ENCODE measurements at regions of chr9 and their contacts with region 1.

Region 1: GRCh38 chr9:127869310-127870152 is 7.9 kb downstream of the AK1 start:
- DNase-seq: peak; percentile 85
- ATAC-seq: peak; percentile 76
- H3K4me3 ChIP-seq: no peak overlapping the region
- H3K4me3 Mint-ChIP-seq: no peak overlapping the region
- H3K27ac ChIP-seq: no peak overlapping the region
- H3K27ac Mint-ChIP-seq: peak overlapping the region; percentile 53
- H3K4me1 ChIP-seq: peaks cover 16 to 29% of the 10 kb centered on the region in 2 donors
- H3K4me1 Mint-ChIP-seq: peaks cover 25% of the 10 kb centered on the region
- H3K27me3 ChIP-seq: no peaks in the 10 kb centered on the region
- H3K27me3 Mint-ChIP-seq: no peaks in the 10 kb centered on the region
- CTCF ChIP-seq: peak; percentile 92

Region 2: GRCh38 chr9:127586537-127586936 is 283.0 kb before region 1 on chr9:
- CTCF ChIA-PET with region 1: interaction called, 23 read pairs
- POLR2A ChIA-PET with region 1: no interaction called
- intact Hi-C with region 1: loop called (anchors 1 kb)
- DNase-seq: peak; percentile 63
- ATAC-seq: peak; percentile 68
- H3K4me3 ChIP-seq: no peak overlapping the region
- H3K4me3 Mint-ChIP-seq: no peak overlapping the region
- H3K27ac ChIP-seq: no peak overlapping the region
- H3K27ac Mint-ChIP-seq: no peak overlapping the region
- H3K4me1 ChIP-seq: no peaks in the 10 kb centered on the region
- H3K4me1 Mint-ChIP-seq: no peaks in the 10 kb centered on the region
- H3K27me3 ChIP-seq: peaks cover 0 to 24% (median 7%) of the 10 kb centered on the region in 4 experiments
- H3K27me3 Mint-ChIP-seq: peaks cover 37% of the 10 kb centered on the region
- CTCF ChIP-seq: peak; percentile 63

Region 3: DNA sequence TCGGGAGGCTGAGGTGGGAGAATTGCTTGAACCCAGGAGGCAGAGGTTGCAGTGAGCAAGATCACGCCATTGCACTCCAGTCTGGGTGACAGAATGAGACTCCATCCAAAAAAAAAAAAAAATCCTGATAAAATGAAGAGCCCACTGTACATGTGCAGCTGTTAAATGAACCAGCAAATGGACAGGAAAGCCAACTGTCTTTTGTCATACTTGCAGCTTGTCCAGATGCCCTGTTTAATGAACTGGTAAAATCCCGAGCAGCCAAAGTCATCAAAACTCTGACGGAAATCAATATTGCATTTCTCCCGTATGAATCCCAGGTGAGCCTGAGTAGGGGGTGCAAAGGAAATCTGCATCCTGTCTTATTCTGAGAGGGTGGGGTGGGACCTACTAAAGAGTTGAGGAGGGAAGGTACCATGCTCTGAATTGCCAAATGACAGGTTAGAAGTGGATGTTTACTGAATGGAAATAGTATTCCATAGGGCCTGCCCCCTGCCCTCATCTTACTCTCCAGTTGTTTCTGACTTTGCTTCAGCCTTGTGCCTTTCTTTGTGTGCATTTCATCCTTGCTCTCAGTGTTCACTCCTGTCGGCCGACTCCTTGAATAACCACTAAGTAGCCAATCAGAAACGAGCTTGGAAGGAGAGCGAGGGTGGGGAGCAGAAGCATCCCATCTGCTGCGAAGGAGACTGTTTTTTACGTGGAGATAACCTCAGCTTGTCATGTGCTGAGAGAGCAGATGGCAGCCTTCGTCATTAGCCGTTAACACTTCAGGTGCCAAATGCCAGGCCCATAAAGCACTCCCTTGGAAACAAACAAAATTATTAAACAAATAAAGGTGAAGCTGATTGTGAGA is 208.4 kb before region 1 on chr9:
- CTCF ChIA-PET with region 1: no interaction called
- POLR2A ChIA-PET with region 1: no interaction called
- intact Hi-C with region 1: no loop called
- DNase-seq: no peak
- ATAC-seq: no peak
- H3K4me3 ChIP-seq: no peak overlapping the region
- H3K4me3 Mint-ChIP-seq: no peak overlapping the region
- H3K27ac ChIP-seq: no peak overlapping the region
- H3K27ac Mint-ChIP-seq: no peak overlapping the region
- H3K4me1 ChIP-seq: no peaks in the 10 kb centered on the region
- H3K4me1 Mint-ChIP-seq: no peaks in the 10 kb centered on the region
- H3K27me3 ChIP-seq: peaks cover 0 to 9% (median 0%) of the 10 kb centered on the region in 4 experiments
- H3K27me3 Mint-ChIP-seq: peaks cover 40% of the 10 kb centered on the region
- CTCF ChIP-seq: no peak

Region 4: DNA sequence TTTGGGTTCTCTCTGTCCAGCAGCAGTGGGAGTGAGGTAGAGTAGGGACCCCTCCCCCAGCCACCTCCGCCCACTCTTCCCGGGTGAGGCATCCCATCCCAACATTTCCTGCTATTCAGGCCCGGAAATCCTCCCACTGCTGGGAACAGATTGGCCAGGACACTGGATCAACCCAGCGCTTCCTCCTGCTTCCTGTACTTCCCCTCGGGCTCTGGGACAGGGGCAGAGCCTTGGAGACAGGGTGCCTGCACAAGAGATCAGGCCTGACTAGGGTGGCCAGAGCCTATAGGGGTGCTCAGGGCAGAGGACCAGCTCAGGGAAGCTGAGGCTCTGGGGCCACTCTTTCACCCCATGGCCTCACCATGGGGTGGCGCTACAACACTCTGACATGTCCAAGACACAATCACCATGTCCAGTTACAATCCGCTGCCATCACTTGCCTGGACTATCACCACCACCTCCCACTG is 105.6 kb before region 1 on chr9:
- CTCF ChIA-PET with region 1: interaction called, 25 read pairs
- POLR2A ChIA-PET with region 1: no interaction called
- intact Hi-C with region 1: no loop called
- DNase-seq: peak; percentile 44
- ATAC-seq: peak; percentile 39
- H3K4me3 ChIP-seq: no peak overlapping the region
- H3K4me3 Mint-ChIP-seq: no peak overlapping the region
- H3K27ac ChIP-seq: peak overlapping the region in 1 of 2 donors; percentile 45
- H3K27ac Mint-ChIP-seq: peak overlapping the region; percentile 73
- H3K4me1 ChIP-seq: peaks cover 22 to 44% of the 10 kb centered on the region in 2 donors
- H3K4me1 Mint-ChIP-seq: peaks cover 60% of the 10 kb centered on the region
- H3K27me3 ChIP-seq: no peaks in the 10 kb centered on the region
- H3K27me3 Mint-ChIP-seq: no peaks in the 10 kb centered on the region
- CTCF ChIP-seq: peak; percentile 34

Region 5: DNA sequence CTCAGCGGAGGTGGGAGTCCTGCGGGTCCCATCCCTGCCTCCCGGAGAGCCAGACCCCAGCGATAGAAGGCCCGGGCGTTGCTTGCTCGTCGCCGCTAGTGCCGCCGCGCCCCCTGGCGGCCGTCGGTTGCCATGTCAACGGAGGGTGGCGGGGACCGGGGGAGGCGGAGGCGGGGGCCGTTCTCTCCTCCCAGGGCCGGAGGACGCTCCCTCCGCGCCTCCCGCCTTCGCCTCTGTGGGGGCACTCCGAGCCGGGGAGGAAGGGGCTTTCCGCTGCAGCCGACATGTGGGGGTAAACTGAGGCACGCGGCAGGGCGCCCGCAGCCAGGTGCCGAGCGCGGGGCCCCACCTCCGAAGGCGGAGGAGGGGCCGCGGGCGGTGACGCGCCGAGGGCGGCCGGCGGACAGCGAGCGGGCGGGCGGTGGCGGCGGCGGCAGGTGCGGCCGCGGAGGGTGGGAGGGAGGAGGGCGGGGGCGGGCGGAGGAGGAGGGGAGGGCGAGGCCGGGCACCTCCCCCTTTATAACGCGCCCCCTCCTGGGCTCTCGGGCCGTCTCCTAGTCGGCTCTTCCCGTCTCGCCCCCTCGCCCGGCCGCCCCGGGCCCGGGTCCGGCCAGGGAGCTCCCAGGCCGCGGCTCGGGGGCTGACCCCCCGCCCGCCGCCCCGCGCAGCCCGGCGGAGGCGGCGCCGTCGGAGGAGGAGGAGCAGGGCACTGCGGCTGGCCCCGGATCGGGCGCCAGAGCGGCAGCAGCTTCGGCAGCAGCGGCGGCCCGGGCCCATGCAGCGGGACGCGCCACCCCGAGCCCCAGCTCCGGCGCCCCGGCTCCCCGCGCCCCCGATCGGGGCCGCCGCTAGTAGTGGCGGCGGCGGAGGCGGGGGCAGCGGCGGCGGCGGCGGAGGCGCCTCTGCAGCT is 84.3 kb before region 1 on chr9:
- CTCF ChIA-PET with region 1: interaction called, 34 read pairs
- POLR2A ChIA-PET with region 1: interaction called, 7 read pairs
- intact Hi-C with region 1: loop called (anchors 1 kb)
- DNase-seq: peak; percentile 95
- ATAC-seq: peak; percentile 62
- H3K4me3 ChIP-seq: peak overlapping the region in 4 of 5 experiments; percentile 48 to 99 (median 92)
- H3K4me3 Mint-ChIP-seq: peak overlapping the region; percentile 90
- H3K27ac ChIP-seq: peak overlapping the region; percentile 91 to 95
- H3K27ac Mint-ChIP-seq: peak overlapping the region; percentile 98
- H3K4me1 ChIP-seq: peaks cover 44 to 60% of the 10 kb centered on the region in 2 donors
- H3K4me1 Mint-ChIP-seq: peaks cover 56% of the 10 kb centered on the region
- H3K27me3 ChIP-seq: no peaks in the 10 kb centered on the region
- H3K27me3 Mint-ChIP-seq: no peaks in the 10 kb centered on the region
- CTCF ChIP-seq: peak; percentile 80

Region 6: GRCh38 chr9:127825319-127826051 is 44.0 kb before region 1 on chr9:
- CTCF ChIA-PET with region 1: interaction called, 14 read pairs
- POLR2A ChIA-PET with region 1: no interaction called
- intact Hi-C with region 1: no loop called
- DNase-seq: no peak
- ATAC-seq: no peak
- H3K4me3 ChIP-seq: no peak overlapping the region
- H3K4me3 Mint-ChIP-seq: no peak overlapping the region
- H3K27ac ChIP-seq: no peak overlapping the region
- H3K27ac Mint-ChIP-seq: no peak overlapping the region
- H3K4me1 ChIP-seq: no peaks in the 10 kb centered on the region
- H3K4me1 Mint-ChIP-seq: no peaks in the 10 kb centered on the region
- H3K27me3 ChIP-seq: no peaks in the 10 kb centered on the region
- H3K27me3 Mint-ChIP-seq: no peaks in the 10 kb centered on the region
- CTCF ChIP-seq: no peak

Region 7: DNA sequence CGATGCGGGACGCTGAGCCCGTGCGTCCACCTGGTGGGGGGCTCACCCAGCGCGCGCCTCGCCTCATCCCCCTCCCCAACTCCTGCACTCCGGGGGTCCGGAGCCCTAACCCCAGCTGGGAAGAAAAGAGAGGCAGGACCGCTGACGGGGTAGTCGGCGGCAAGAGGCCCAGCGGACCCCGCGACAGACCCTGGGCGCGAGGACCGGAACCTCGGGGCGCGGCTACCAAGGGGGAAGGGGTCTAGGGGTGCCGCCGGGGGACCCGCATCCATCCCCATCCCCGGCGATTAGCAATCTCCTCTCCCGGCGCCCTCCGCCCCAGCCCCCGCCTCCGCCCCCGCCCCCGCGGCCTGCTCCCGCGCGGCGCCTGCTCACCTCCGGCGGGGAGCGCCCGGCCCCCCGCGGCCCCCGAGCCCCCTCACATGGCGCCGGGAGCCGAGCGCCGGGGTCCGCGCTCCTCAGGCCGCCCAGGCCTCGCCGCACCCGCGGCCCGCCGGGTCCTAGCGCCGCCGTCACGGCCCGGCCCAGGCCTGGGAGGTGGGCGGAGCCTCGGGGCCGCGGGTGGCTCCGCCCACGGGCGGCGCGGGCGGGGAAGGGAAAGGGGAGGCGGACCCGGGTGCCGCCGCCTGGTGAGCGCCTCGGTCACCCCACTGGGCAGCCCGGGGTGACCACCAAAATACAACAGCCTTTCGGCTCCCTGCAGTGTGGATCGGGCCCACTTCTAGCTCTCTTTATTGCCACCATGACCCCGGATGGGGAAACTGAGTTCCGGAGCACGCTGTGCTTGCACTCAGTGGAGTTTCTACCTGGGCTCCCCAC is 29.8 kb after region 1 on chr9 and contains the start of gene ST6GALNAC6:
- CTCF ChIA-PET with region 1: interaction called, 12 read pairs
- POLR2A ChIA-PET with region 1: interaction called, 6 read pairs
- intact Hi-C with region 1: no loop called
- DNase-seq: peak; percentile 82
- ATAC-seq: peak; percentile 81
- H3K4me3 ChIP-seq: peak within 1 kb of the TSS; percentile 61 to 83 (median 82)
- H3K4me3 Mint-ChIP-seq: peak within 1 kb of the TSS; percentile 90
- H3K27ac ChIP-seq: peak within 1 kb of the TSS; percentile 56 to 66
- H3K27ac Mint-ChIP-seq: peak within 1 kb of the TSS; percentile 88
- H3K4me1 ChIP-seq: peaks cover 41 to 69% of the 10 kb centered on the region in 2 donors
- H3K4me1 Mint-ChIP-seq: peaks cover 51% of the 10 kb centered on the region
- H3K27me3 ChIP-seq: no peaks in the 10 kb centered on the region
- H3K27me3 Mint-ChIP-seq: no peaks in the 10 kb centered on the region
- CTCF ChIP-seq: no peak
- total RNA-seq, gene ST6GALNAC6: 126 and 136 TPM in 2 replicates